WTC11 (cell line): ENCODE measurements at regions of chr16 and their contacts with region 1.

Region 1: DNA sequence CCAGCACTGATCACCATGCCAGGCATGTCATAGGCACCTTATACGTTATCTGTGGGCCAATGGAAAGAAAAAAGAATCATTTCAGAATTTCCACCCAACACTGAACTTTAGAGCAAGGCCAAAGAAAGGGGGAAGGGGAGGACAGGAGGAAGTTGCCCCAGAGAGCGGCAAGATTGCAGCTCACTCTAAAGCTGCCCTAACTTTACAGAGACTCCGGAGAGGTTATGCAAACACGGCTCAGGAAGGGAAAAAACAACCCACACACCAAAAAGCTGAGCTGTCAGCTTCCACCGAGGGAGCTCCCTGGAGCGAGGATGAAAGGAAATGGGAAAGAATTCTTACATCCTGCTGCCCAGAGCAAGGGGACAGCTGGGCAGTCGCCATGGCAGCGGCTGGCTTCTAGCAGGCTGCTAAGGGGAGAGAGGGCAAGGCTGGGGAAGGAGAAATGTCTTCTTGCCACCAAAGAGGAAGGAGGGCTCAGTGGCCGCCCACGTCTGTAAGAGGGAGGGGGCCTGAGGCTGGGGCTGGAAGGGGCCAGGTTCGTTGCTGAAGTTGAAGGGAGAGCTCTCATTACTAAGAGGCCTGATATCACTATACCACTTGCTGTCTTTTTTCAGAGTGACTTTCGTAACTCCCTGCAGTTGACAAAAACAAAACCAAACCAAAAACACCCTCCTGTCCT is 18.2 kb downstream of the COTL1 start:
- DNase-seq: peak; percentile 74
- ATAC-seq: peak; percentile 74
- H3K4me3 Mint-ChIP-seq: peak overlapping the region; percentile 41
- H3K27ac Mint-ChIP-seq: peak overlapping the region; percentile 29
- H3K4me1 Mint-ChIP-seq: peaks cover 63% of the 10 kb centered on the region
- H3K27me3 Mint-ChIP-seq: no peaks in the 10 kb centered on the region; the same call in 1 of the 2 replicates
- CTCF ChIP-seq: no peak

Region 2: DNA sequence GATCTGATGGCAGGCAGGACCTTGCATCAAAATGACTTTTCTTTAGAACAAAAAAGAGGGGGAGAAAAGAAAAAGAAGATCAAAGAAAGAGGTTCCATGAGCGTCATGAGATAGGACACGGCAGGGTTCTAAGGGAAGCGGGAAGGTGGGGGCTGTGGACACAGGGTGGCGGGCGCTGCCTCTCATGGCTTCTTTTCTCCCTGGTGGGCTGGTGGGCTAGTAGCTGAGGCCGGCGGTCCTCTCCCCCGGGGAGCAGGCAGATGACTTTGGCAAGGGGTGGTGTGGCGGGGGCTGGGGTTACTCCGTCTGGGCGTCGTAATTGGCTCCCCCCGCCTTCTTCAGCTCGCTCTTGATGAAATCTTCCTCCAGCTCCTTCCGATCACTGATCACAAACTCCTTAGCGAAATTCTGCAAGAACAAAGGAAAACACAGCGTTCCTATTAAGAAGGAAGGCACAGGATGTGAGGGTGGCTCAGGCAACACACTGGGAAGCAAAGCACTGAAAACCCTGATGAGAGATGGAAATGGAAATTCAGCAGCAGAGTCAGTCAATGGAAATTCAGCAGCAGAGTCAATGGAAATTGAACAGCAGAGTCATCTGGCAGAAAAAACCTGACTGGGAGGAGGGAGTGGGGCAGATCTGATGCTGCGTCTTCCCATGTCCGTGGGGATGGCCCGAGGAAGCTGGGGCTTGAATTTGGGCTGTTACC is 33.0 kb before region 1 on chr16:
- CTCF ChIA-PET with region 1: interaction called, 11 read pairs
- POLR2A ChIA-PET with region 1: interaction called, 7 read pairs
- DNase-seq: no peak
- ATAC-seq: peak; percentile 31
- H3K4me3 Mint-ChIP-seq: 0 out of 2 replicates have a peak overlapping the region, but pooled peaks have one; percentile 18
- H3K27ac Mint-ChIP-seq: peak overlapping the region; percentile 84
- H3K4me1 Mint-ChIP-seq: peaks cover 39% of the 10 kb centered on the region
- H3K27me3 Mint-ChIP-seq: no peaks in the 10 kb centered on the region
- CTCF ChIP-seq: no peak